GM10248 (cell line): ENCODE measurements at regions of chr10 and their contacts with region 1.

Region 1: GRCh38 chr10:123132576-123133477 is 2.9 kb upstream of the HMX3 start:
- DNase-seq: peak; percentile 90
- CTCF ChIP-seq: peak; percentile 97

Region 2: GRCh38 chr10:123096452-123096851 is 36.4 kb before region 1 on chr10:
- CTCF ChIA-PET with region 1: no interaction called
- POLR2A ChIA-PET with region 1: no interaction called
- DNase-seq: no peak
- CTCF ChIP-seq: no peak

Region 3: GRCh38 chr10:123144697-123145541 is 12.1 kb after region 1 on chr10:
- CTCF ChIA-PET with region 1: interaction called, 14 read pairs
- POLR2A ChIA-PET with region 1: no interaction called
- DNase-seq: peak; percentile 33
- CTCF ChIP-seq: no peak

Region 4: GRCh38 chr10:123552760-123553554 is 420.1 kb after region 1 on chr10:
- CTCF ChIA-PET with region 1: interaction called, 22 read pairs
- POLR2A ChIA-PET with region 1: no interaction called
- DNase-seq: peak; percentile 68
- CTCF ChIP-seq: no peak

Region 5: GRCh38 chr10:123559066-123559822 is 426.4 kb after region 1 on chr10:
- CTCF ChIA-PET with region 1: interaction called, 22 read pairs
- POLR2A ChIA-PET with region 1: no interaction called
- DNase-seq: peak; percentile 88
- CTCF ChIP-seq: peak; percentile 100